AG04450 (cell line): ENCODE measurements at regions of chr9 and their contacts with region 1.

Region 1: DNA sequence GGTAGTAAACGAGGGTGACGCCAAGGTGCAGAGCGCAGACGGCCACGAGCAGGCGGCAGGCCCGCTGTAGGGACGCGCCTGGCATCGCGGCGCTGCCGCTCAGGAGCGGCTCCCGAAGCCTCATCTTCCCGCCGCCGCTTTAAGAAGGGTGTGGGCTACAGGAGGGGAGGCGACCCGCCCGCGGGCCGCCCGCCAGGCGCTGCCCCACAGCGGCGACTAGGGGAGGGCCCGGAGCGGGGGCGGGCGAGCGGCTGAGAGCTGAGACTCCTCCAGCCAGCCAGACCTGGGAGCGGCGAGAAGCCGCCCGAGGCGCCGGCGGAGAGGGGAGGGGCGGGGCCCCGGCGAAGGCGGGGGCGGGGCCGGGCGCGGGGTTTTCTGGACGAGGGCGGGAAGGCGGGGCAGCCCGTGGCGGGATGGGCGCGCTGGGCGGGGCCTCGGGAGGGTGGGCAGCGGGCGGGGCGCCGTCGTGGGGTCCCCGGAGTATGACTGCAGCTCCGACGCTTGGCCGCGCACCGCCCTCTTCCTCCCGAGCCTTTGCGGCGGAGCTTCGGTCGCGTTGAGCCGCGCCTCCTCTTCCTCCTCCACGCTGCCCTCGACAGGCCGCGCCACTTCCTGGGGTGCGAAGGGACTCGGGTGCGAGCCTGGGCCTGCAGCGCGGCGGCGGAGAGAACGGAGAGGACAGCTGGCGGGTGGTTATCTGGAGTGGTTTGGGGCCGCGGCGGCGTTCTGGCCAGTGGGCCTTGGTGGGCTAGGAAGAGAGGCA is at the start of gene B4GALT1:
- DNase-seq: peak; percentile 76
- H3K4me3 ChIP-seq: peak within 1 kb of the TSS; percentile 89
- H3K27ac ChIP-seq: peak within 1 kb of the TSS; percentile 65
- H3K27me3 ChIP-seq: no peaks in the 10 kb centered on the region
- CTCF ChIP-seq: no peak
- polyA plus RNA-seq, gene B4GALT1: 55.3 and 57.0 TPM in 2 replicates

Region 2: GRCh38 chr9:33139421-33140228 is 27.6 kb before region 1 on chr9:
- CTCF ChIA-PET with region 1: no interaction called
- POLR2A ChIA-PET with region 1: interaction called, 13 read pairs
- DNase-seq: peak; percentile 90
- H3K4me3 ChIP-seq: peak overlapping the region; percentile 20
- H3K27ac ChIP-seq: peak overlapping the region; percentile 84
- H3K27me3 ChIP-seq: no peaks in the 10 kb centered on the region
- CTCF ChIP-seq: no peak

Region 3: GRCh38 chr9:33151007-33151557 is 16.1 kb before region 1 on chr9:
- CTCF ChIA-PET with region 1: interaction called, 3 read pairs
- POLR2A ChIA-PET with region 1: interaction called, 12 read pairs
- DNase-seq: peak; percentile 90
- H3K4me3 ChIP-seq: peak overlapping the region; percentile 35
- H3K27ac ChIP-seq: peak overlapping the region; percentile 85
- H3K27me3 ChIP-seq: no peaks in the 10 kb centered on the region
- CTCF ChIP-seq: no peak

Region 4: GRCh38 chr9:33225319-33226149 is 58.3 kb after region 1 on chr9:
- CTCF ChIA-PET with region 1: interaction called, 10 read pairs
- POLR2A ChIA-PET with region 1: interaction called, 8 read pairs
- DNase-seq: peak; percentile 64
- H3K4me3 ChIP-seq: no peak overlapping the region
- H3K27ac ChIP-seq: no peak overlapping the region
- H3K27me3 ChIP-seq: no peaks in the 10 kb centered on the region
- CTCF ChIP-seq: peak; percentile 65